H1 (cell line): ENCODE measurements at regions of chr1 and their contacts with region 1.

Region 1: DNA sequence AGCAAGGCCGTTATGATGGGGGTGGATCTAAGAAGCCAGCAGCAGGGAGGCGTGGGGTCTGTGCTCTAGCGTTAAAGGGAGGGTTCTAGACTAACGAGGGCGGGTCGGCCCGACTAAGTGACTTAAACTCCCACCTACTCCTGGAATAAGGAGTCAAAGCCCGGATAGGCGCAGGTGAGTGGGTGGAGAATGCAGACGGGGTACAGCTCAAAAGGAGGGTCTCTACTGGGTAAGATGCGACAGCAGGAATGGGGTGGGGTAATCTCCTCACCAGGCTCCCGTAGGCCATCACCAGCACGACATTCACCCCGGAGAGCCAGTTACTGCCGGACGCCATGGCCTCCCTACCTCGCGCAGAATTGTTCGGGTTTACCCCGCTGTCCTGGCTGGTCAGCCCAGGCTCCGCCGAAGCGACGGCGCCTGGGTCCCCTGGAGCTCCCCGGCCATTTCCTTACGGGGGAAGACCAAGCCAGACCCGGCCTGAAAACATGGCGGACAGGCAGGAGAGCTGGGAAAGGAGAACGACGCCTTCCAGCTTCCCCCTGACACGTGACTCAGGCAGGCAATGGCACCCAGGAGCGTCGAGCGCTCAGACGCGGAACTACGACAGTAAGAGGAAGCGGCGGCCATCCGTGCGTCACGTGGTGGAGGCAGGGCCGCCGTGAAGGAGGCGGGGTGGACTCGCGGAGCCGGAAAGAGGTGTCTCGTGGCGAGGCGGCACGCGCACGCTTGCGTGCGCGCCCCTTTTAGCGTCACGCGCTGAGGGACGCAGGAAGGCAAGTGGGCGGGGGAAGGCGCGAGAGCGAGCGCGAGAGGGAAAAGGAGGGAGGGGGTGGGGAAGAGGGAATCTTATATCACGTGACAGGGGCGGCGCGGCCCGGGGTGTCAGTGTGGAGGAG is at the start of gene UBAP2L:
- DNase-seq: peak; percentile 96 to 99
- H3K4me3 ChIP-seq: peak within 1 kb of the TSS; percentile 83 to 96 (median 90)
- H3K27ac ChIP-seq: peak within 1 kb of the TSS; percentile 99
- H3K4me1 ChIP-seq: peaks cover 2 to 11% (median 3%) of the 10 kb centered on the region in 4 experiments; a peak in 5 of 7 replicates
- H3K27me3 ChIP-seq: no peaks in the 10 kb centered on the region
- CTCF ChIP-seq: no peak
- EP300 ChIP-seq: no peak
- POLR2A ChIP-seq: peak; percentile 90 to 97
- RAD21 ChIP-seq: no peak
- total RNA-seq, gene UBAP2L: 253 and 254 TPM in 2 replicates

Region 2: GRCh38 chr1:154198756-154199562 is 21.4 kb before region 1 on chr1:
- CTCF ChIA-PET with region 1: interaction called, 8 read pairs
- POLR2A ChIA-PET with region 1: interaction called, 99 read pairs
- DNase-seq: peak in 1 of 2 experiments; percentile 51
- H3K4me3 ChIP-seq: no peak overlapping the region; a peak in 1 of 8 replicates
- H3K27ac ChIP-seq: no peak overlapping the region
- H3K4me1 ChIP-seq: peaks cover 0 to 7% (median 2%) of the 10 kb centered on the region in 4 experiments; a peak in 1 of 7 replicates
- H3K27me3 ChIP-seq: no peaks in the 10 kb centered on the region
- CTCF ChIP-seq: peak; percentile 3 to 63 (median 49); a peak in 3 of 4 replicates
- EP300 ChIP-seq: no peak
- POLR2A ChIP-seq: no peak
- RAD21 ChIP-seq: peak; percentile 56 to 71

Region 3: GRCh38 chr1:154206196-154206595 is 14.1 kb before region 1 on chr1 and contains the start of gene CFAP141:
- CTCF ChIA-PET with region 1: no interaction called
- POLR2A ChIA-PET with region 1: interaction called, 99 read pairs
- DNase-seq: no peak
- H3K4me3 ChIP-seq: no peak within 1 kb of the TSS
- H3K27ac ChIP-seq: no peak within 1 kb of the TSS; the same call in 1 of the 2 replicates
- H3K4me1 ChIP-seq: no peaks in the 10 kb centered on the region
- H3K27me3 ChIP-seq: no peaks in the 10 kb centered on the region
- CTCF ChIP-seq: no peak
- EP300 ChIP-seq: no peak
- POLR2A ChIP-seq: no peak
- RAD21 ChIP-seq: no peak
- total RNA-seq, gene CFAP141: not detected in 2 replicates